ENCODE measurements at regions of chr1 and their contacts with region 1.

Region 1: GRCh38 chr1:160768295-160768657 is 27.7 kb upstream of the LY9 start:
- DNase-seq: peak; percentile 65 to 93 (median 85)
- ATAC-seq: peak; percentile 93 to 96 (median 94)
- H3K4me3 ChIP-seq: peak overlapping the region; percentile 39 to 45
- H3K4me3 Mint-ChIP-seq: peak overlapping the region; percentile 74 to 83 (median 75)
- H3K27ac ChIP-seq: peak overlapping the region; percentile 90
- H3K27ac Mint-ChIP-seq: peak overlapping the region; percentile 96 to 98
- H3K4me1 ChIP-seq: peaks cover 12 to 17% of the 10 kb centered on the region in 2 experiments
- H3K4me1 Mint-ChIP-seq: peaks cover 21% of the 10 kb centered on the region in 3 donors
- H3K27me3 ChIP-seq: no peaks in the 10 kb centered on the region
- H3K27me3 Mint-ChIP-seq: no peaks in the 10 kb centered on the region

Region 2: GRCh38 chr1:160629286-160630210 is 138.7 kb before region 1 on chr1:
- CTCF ChIA-PET with region 1: no interaction called
- POLR2A ChIA-PET with region 1: no interaction called
- DNase-seq: peak; percentile 47 to 92 (median 80)
- ATAC-seq: peak; percentile 85 to 91 (median 87)
- H3K4me3 ChIP-seq: peak overlapping the region; percentile 33 to 50
- H3K4me3 Mint-ChIP-seq: peak overlapping the region; percentile 66 to 78 (median 73)
- H3K27ac ChIP-seq: peak overlapping the region; percentile 95
- H3K27ac Mint-ChIP-seq: peak overlapping the region; percentile 96 to 98
- H3K4me1 ChIP-seq: peaks cover 81 to 95% of the 10 kb centered on the region in 2 experiments
- H3K4me1 Mint-ChIP-seq: peaks cover 92 to 98% (median 98%) of the 10 kb centered on the region in 3 donors
- H3K27me3 ChIP-seq: no peaks in the 10 kb centered on the region
- H3K27me3 Mint-ChIP-seq: no peaks in the 10 kb centered on the region

Region 3: DNA sequence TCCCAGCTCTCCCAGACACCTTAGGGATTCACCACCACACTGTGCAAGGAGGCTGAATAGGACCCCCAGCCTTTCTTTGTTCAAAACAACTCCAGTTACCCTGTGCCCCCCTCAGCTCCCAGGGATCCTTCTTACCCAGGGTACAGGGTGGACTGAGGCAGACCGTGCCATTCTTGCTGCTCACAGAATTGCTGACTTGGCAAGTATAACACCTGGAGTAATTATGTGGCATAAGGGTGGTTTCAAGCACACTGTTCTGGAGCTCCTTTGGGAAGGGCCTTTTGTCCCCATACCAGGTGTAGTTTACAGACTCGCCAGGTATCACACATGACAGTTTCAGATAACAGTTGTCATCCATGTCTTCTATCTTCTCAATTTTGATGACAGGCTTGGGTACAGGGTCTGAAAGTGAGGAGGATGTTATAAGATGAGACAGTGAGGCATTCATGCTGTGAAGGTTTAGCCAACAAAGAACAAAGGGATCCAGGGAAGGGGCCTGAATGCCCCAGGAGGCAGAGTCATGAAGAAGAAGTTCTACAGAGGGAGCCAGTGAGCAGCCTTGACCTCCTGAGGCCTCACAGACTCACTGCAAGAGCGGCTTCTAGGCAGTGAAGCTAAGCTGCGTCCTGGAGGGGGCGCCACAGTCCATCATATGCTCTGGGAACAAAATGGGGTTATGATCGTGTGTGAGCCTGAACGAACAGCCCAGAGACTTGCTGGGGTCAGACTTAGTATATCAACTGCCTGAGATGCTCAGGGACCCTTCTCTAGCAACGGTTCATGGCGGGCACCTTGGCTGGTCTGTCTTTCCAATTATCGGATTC is 87.0 kb before region 1 on chr1:
- CTCF ChIA-PET with region 1: interaction called, 31 to 89 read pairs
- POLR2A ChIA-PET with region 1: interaction called, 6 to 7 read pairs
- DNase-seq: peak; percentile 78 to 95 (median 87)
- ATAC-seq: peak; percentile 82 to 89 (median 87)
- H3K4me3 ChIP-seq: no peak overlapping the region
- H3K4me3 Mint-ChIP-seq: peak overlapping the region in 1 of 3 donors; percentile 63
- H3K27ac ChIP-seq: peak overlapping the region; percentile 48
- H3K27ac Mint-ChIP-seq: peak overlapping the region; percentile 90 to 95
- H3K4me1 ChIP-seq: peaks cover 28 to 55% of the 10 kb centered on the region in 2 experiments
- H3K4me1 Mint-ChIP-seq: peaks cover 52 to 61% (median 57%) of the 10 kb centered on the region in 3 donors
- H3K27me3 ChIP-seq: no peaks in the 10 kb centered on the region
- H3K27me3 Mint-ChIP-seq: no peaks in the 10 kb centered on the region

Region 4: DNA sequence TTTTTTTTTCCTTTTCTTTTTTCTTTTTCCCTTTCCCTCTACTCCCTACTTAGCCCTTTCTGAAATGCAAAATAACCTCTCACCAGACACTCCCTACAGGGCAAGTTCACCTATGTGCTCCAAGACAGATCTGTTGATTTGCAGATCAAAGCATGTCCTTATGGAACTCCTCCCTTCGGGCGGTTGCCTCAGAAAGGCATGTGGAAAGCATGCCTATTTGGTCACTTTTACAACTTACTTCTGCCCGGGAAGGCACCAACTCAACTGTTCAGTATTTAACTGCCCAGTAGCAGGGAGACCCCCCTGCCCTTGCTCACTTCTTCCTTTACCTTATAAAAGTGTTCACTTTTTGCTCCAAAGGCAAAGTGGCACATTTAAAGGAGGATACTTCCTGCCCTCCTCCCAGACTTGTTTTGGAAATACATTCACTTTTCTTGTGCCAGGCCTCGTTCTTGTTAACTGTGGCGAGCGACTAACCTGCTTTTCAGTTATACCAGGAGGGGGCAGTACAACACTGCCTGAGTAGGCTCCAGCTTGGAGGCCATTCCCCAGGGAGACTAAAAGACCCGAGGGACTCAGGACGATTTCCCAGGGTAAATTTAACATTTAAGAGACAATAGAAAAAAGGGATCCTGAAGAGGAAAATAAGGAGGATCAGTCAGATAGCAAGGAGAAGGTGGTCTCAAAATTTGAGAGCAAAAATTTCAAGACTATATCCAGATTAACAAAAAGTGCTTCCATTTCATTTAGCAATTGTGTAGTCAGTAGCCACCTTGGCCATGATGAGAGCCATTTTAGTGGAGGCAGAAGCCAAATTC is 41.6 kb before region 1 on chr1:
- CTCF ChIA-PET with region 1: interaction called, 6 to 101 read pairs
- POLR2A ChIA-PET with region 1: no interaction called
- DNase-seq: peak in 34 of 35 experiments; percentile 19 to 89 (median 52)
- ATAC-seq: peak; percentile 74 to 87 (median 77)
- H3K4me3 ChIP-seq: no peak overlapping the region
- H3K4me3 Mint-ChIP-seq: no peak overlapping the region
- H3K27ac ChIP-seq: no peak overlapping the region
- H3K27ac Mint-ChIP-seq: no peak overlapping the region
- H3K4me1 ChIP-seq: peaks cover 6 to 17% of the 10 kb centered on the region in 2 experiments
- H3K4me1 Mint-ChIP-seq: peaks cover 17 to 18% (median 17%) of the 10 kb centered on the region in 3 donors
- H3K27me3 ChIP-seq: no peaks in the 10 kb centered on the region
- H3K27me3 Mint-ChIP-seq: no peaks in the 10 kb centered on the region

Region 5: DNA sequence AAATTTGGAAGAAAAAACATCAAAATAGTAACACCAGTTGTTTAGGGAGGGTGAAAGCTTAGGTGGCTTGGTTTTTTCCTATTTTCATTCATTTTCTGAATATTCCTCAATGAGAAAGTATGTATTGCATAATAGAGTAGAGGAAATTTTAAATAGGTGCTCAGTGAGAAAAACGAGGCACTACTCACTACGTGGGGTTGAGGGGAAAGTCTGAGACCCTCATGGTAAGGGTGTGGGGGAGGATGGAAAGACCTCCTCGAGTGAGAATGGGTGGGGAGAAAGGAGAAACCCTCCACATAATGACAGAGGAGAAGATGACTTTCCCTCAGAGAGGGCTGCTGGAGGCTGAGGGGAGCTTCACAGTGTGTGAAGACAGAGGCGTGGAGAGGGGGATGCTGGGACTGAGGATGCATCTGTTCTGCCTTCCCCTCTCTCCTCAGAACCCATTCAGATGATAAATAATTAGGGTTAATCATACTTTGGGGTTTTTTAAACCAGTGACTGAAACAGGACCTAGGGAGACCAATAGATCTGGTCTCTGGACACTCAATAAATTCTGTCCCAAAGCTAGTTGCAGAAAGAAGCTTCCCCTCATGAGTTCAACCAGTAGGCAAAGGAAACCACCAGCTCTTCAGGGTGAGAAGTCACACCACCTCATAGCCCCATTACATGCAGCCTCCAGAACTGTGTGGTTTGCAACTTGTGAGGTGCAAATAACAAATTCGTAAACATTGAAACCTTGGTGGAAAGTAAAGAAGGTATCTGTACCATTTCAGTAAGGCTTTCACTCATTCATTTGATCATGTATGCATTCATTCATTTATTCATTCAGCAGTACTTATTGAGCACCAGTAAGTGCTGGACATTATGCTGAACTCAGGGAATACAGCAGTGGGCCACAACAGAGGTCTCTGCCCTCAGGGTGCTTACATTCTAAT is 12.1 kb before region 1 on chr1:
- CTCF ChIA-PET with region 1: interaction called, 3 to 20 read pairs
- POLR2A ChIA-PET with region 1: no interaction called
- DNase-seq: peak in 20 of 35 experiments; percentile 14 to 77 (median 33)
- ATAC-seq: peak; percentile 50 to 79 (median 64)
- H3K4me3 ChIP-seq: no peak overlapping the region
- H3K4me3 Mint-ChIP-seq: peak overlapping the region in 1 of 3 donors; percentile 21
- H3K27ac ChIP-seq: peak overlapping the region; percentile 76
- H3K27ac Mint-ChIP-seq: peak overlapping the region; percentile 74 to 83
- H3K4me1 ChIP-seq: peaks cover 0 to 42% of the 10 kb centered on the region in 2 experiments
- H3K4me1 Mint-ChIP-seq: peaks cover 21 to 36% (median 31%) of the 10 kb centered on the region in 3 donors
- H3K27me3 ChIP-seq: no peaks in the 10 kb centered on the region
- H3K27me3 Mint-ChIP-seq: no peaks in the 10 kb centered on the region

Region 6: GRCh38 chr1:160806109-160806665 is 37.9 kb after region 1 on chr1:
- CTCF ChIA-PET with region 1: interaction called, 4 to 15 read pairs
- POLR2A ChIA-PET with region 1: no interaction called
- DNase-seq: peak in 1 of 35 experiments; percentile 22
- ATAC-seq: peak in 1 of 4 experiments; percentile 46
- H3K4me3 ChIP-seq: no peak overlapping the region
- H3K4me3 Mint-ChIP-seq: peak overlapping the region in 2 of 3 donors; percentile 41 to 71
- H3K27ac ChIP-seq: no peak overlapping the region
- H3K27ac Mint-ChIP-seq: peak overlapping the region in 1 of 2 donors; percentile 69
- H3K4me1 ChIP-seq: peaks cover 12 to 38% of the 10 kb centered on the region in 2 experiments
- H3K4me1 Mint-ChIP-seq: peaks cover 84 to 91% (median 85%) of the 10 kb centered on the region in 3 donors
- H3K27me3 ChIP-seq: no peaks in the 10 kb centered on the region
- H3K27me3 Mint-ChIP-seq: no peaks in the 10 kb centered on the region